ENCODE measurements at regions of chr6 and their contacts with region 1.

Region 1: GRCh38 chr6:111997078-111997852 is 56.6 kb upstream of the CCN6 start:
- DNase-seq: peak; percentile 76
- H3K4me3 Mint-ChIP-seq: no peak overlapping the region
- H3K27ac Mint-ChIP-seq: no peak overlapping the region
- H3K4me1 Mint-ChIP-seq: peaks cover 12% of the 10 kb centered on the region
- H3K27me3 Mint-ChIP-seq: no peaks in the 10 kb centered on the region
- CTCF ChIP-seq: peak; percentile 85

Region 2: DNA sequence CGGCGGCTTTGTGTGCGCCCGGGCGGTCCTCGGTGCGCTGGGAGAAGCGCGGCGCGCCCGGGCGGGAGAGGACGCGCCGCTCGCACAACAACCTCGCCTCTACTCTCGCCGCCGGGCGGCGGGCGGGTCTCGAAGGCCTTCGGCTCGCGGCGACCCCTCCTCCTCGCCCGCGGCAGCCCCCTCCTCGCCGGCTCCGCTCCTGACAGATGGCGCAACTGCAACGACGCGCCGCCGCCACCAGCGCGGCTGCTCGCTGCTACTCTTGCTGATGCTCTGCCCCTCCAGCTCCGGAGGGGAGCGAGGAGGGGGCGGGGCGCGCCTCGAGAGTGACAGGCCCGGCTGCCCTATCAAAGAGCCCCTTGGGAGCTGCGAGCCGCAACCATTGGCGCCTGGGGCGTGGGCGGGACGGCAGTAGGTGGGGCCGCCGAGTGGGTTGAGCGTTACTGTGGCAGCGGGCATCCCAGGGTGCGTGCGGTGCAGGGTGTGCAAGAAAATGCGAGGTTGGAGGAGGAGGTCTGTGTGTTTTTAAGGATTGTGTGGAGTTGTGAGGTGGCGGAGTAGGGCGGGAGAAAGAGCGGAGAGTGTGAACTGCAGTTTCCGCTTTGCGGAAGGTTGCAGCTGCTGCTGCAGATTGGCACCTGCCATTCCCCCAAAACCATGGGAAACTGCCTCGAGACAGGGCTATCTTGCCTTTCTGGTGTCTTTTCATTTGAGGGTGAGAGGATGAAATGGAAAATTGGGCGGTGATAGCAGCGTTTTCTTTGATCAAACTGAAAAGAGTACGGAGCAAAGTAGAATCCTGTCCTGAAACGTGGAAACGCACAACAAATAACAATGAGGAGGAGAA is 123.9 kb before region 1 on chr6 and contains the start of gene FYN:
- CTCF ChIA-PET with region 1: interaction called, 7 read pairs
- POLR2A ChIA-PET with region 1: no interaction called
- intact Hi-C with region 1: loop called (anchors 1 kb)
- DNase-seq: peak; percentile 96
- H3K4me3 Mint-ChIP-seq: peak within 1 kb of the TSS; percentile 82
- H3K27ac Mint-ChIP-seq: peak within 1 kb of the TSS; percentile 28
- H3K4me1 Mint-ChIP-seq: peaks cover 13% of the 10 kb centered on the region
- H3K27me3 Mint-ChIP-seq: peaks cover 11% of the 10 kb centered on the region
- CTCF ChIP-seq: peak; percentile 13
- total RNA-seq, gene FYN: 37.8 and 53.7 TPM in 2 replicates

Region 3: GRCh38 chr6:111985202-111985731 is 12.0 kb before region 1 on chr6:
- CTCF ChIA-PET with region 1: interaction called, 22 read pairs
- POLR2A ChIA-PET with region 1: no interaction called
- intact Hi-C with region 1: no loop called
- DNase-seq: peak; percentile 66
- H3K4me3 Mint-ChIP-seq: no peak overlapping the region
- H3K27ac Mint-ChIP-seq: peak overlapping the region; percentile 40
- H3K4me1 Mint-ChIP-seq: peaks cover 12% of the 10 kb centered on the region
- H3K27me3 Mint-ChIP-seq: no peaks in the 10 kb centered on the region
- CTCF ChIP-seq: no peak

Region 4: DNA sequence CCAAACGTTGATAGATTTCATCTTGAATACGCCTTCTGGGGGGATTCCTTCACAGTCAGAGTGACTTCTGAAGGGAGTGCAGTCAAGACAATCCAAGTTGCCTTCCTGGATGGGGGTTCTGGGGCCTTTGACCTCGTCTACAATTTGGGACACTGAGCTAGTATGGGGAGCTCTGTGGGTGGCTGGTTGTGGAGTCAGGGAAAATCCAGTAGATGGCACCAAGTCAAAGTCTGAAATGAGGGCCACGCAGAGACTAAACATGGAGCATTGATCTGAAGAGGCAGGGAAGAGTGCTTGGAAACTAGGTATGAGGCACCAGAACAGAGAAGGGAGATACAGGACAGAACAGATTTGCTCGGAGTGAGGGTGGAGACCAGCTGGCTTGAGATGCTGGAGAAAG is 13.1 kb after region 1 on chr6:
- CTCF ChIA-PET with region 1: interaction called, 18 read pairs
- POLR2A ChIA-PET with region 1: no interaction called
- intact Hi-C with region 1: no loop called
- DNase-seq: peak; percentile 20
- H3K4me3 Mint-ChIP-seq: no peak overlapping the region
- H3K27ac Mint-ChIP-seq: no peak overlapping the region
- H3K4me1 Mint-ChIP-seq: peaks cover 14% of the 10 kb centered on the region
- H3K27me3 Mint-ChIP-seq: no peaks in the 10 kb centered on the region
- CTCF ChIP-seq: no peak

Region 5: GRCh38 chr6:112018619-112019416 is 21.6 kb after region 1 on chr6:
- CTCF ChIA-PET with region 1: interaction called, 21 read pairs
- POLR2A ChIA-PET with region 1: no interaction called
- intact Hi-C with region 1: no loop called
- DNase-seq: no peak
- H3K4me3 Mint-ChIP-seq: no peak overlapping the region
- H3K27ac Mint-ChIP-seq: no peak overlapping the region
- H3K4me1 Mint-ChIP-seq: peaks cover 27% of the 10 kb centered on the region
- H3K27me3 Mint-ChIP-seq: no peaks in the 10 kb centered on the region
- CTCF ChIP-seq: no peak

Measured in MCF 10A (cell line).